Activated naive CD4-positive, alpha-beta T cell treated with anti-CD3 and anti-CD28 coated beads for 36 hours (primary cell): ENCODE measurements at regions of chr2 and their contacts with region 1.

Region 1: DNA sequence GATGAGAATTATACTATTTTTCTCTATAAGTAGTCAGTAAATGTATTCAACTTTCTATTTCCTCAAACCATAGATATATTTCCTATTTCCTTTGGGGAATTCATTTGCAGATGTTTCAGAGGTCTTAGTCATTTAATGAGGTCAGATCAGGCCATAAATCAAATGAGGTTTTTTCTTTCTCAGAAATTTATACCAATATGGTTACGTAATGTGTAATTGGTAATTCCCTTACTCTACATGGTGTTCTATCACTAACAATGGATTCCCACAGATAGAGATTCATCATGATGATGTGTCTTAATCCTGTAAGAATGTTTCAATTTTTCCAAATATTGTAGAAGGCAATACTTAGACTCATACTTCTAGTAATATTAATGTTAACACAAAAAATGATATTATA is 108.0 kb downstream of the DPP4 start:
- DNase-seq: no peak
- H3K4me3 Mint-ChIP-seq: no peak overlapping the region
- H3K27ac Mint-ChIP-seq: no peak overlapping the region
- H3K4me1 Mint-ChIP-seq: peaks cover 28% of the 10 kb centered on the region
- H3K27me3 Mint-ChIP-seq: no peaks in the 10 kb centered on the region

Region 2: GRCh38 chr2:161905389-161906046 is 60.5 kb before region 1 on chr2:
- CTCF ChIA-PET with region 1: no interaction called
- intact Hi-C with region 1: loop called (anchors 1 kb)
- DNase-seq: peak; percentile 50
- H3K4me3 Mint-ChIP-seq: no peak overlapping the region
- H3K27ac Mint-ChIP-seq: peak overlapping the region; percentile 57
- H3K4me1 Mint-ChIP-seq: peaks cover 6% of the 10 kb centered on the region
- H3K27me3 Mint-ChIP-seq: no peaks in the 10 kb centered on the region

Region 3: GRCh38 chr2:161981679-161982250 is 15.8 kb after region 1 on chr2:
- CTCF ChIA-PET with region 1: interaction called, 3 read pairs
- intact Hi-C with region 1: loop called (anchors 1 kb)
- DNase-seq: no peak
- H3K4me3 Mint-ChIP-seq: no peak overlapping the region
- H3K27ac Mint-ChIP-seq: no peak overlapping the region
- H3K4me1 Mint-ChIP-seq: peaks cover 24% of the 10 kb centered on the region
- H3K27me3 Mint-ChIP-seq: no peaks in the 10 kb centered on the region